WTC11 (cell line): ENCODE measurements at regions of chr7 and their contacts with region 1.

Region 1: DNA sequence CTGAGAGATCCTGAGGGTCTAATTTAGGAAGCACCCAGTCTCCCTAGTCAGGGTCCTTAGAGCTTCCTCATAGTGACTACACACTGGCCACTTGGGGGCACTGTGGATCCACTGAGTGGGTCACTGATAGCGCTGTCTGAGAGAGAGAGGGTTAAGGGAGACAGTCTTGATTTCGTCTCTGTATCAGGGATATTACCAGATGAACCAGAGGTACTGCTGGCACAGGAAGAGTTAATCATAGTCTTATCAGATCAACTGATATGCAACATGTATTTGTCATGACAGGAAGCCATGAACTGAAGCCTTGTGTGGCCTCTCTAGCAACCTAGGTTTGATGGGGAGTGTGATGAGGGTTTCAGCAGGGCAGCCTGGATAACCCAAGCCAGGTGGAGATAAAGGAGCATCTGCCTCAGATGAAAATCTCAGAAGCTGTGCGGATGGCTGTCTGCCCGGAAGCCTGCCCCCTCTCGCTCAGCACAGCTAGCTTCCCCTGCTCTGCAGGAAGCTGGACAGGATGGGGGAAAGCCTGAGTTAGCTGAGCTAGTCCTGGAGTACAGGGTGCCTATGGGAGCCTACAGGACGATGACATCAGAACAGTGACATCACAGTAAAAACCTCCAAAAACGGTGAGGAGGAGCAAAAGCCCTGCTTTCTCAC is 214.0 kb upstream of the PRSS1 start:
- DNase-seq: peak; percentile 86
- ATAC-seq: peak; percentile 100
- H3K4me3 Mint-ChIP-seq: peak overlapping the region; percentile 42; the same call in 1 of the 2 replicates
- H3K27ac Mint-ChIP-seq: 0 out of 2 replicates have a peak overlapping the region, but pooled peaks have one; percentile 42
- H3K4me1 Mint-ChIP-seq: peaks cover 4% of the 10 kb centered on the region
- H3K27me3 Mint-ChIP-seq: peaks cover 5% of the 10 kb centered on the region; the same call in 1 of the 2 replicates
- CTCF ChIP-seq: peak; percentile 70

Region 2: GRCh38 chr7:142496545-142497041 is 38.7 kb before region 1 on chr7:
- CTCF ChIA-PET with region 1: interaction called, 14 read pairs
- POLR2A ChIA-PET with region 1: no interaction called
- DNase-seq: no peak
- ATAC-seq: peak; percentile 82
- H3K4me3 Mint-ChIP-seq: peak overlapping the region; percentile 45
- H3K27ac Mint-ChIP-seq: no peak overlapping the region
- H3K4me1 Mint-ChIP-seq: no peaks in the 10 kb centered on the region
- H3K27me3 Mint-ChIP-seq: peaks cover 17% of the 10 kb centered on the region
- CTCF ChIP-seq: peak; percentile 74

Region 3: GRCh38 chr7:142523821-142524460 is 11.3 kb before region 1 on chr7:
- CTCF ChIA-PET with region 1: interaction called, 45 read pairs
- POLR2A ChIA-PET with region 1: no interaction called
- DNase-seq: no peak
- ATAC-seq: peak; percentile 27
- H3K4me3 Mint-ChIP-seq: no peak overlapping the region
- H3K27ac Mint-ChIP-seq: no peak overlapping the region
- H3K4me1 Mint-ChIP-seq: peaks cover 3% of the 10 kb centered on the region; the same call in 1 of the 2 replicates
- H3K27me3 Mint-ChIP-seq: peaks cover 2% of the 10 kb centered on the region; the same call in 1 of the 2 replicates
- CTCF ChIP-seq: no peak

Region 4: DNA sequence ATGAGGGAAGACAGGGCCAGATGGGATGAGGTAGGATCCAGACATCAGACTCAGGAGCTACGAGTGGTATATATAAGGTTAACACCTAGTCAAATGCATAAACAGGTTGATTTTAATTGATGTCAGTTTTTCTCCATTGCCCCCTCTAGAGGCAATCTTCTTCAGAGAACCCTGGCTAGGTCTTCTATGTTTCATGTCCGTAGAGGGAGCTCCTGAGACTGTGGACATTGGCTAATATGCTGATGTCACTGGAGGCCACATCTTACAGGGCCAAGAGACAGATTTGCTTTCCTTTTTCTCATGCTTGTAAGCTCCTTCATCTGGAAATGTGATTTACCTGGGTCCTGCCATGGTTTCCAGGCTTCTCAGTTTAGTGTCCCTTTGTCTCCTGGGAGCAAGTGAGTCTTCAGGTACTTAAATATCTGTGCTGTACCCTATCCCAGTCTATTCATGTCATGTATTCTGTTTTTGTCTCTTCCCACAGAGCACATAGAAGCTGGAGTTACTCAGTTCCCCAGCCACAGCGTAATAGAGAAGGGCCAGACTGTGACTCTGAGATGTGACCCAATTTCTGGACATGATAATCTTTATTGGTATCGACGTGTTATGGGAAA is 52.4 kb after region 1 on chr7:
- CTCF ChIA-PET with region 1: interaction called, 53 read pairs
- POLR2A ChIA-PET with region 1: no interaction called
- DNase-seq: no peak
- ATAC-seq: peak; percentile 98
- H3K4me3 Mint-ChIP-seq: no peak overlapping the region
- H3K27ac Mint-ChIP-seq: no peak overlapping the region
- H3K4me1 Mint-ChIP-seq: peaks cover 10% of the 10 kb centered on the region
- H3K27me3 Mint-ChIP-seq: no peaks in the 10 kb centered on the region; the same call in 1 of the 2 replicates
- CTCF ChIP-seq: no peak

Region 5: GRCh38 chr7:142632291-142633134 is 97.3 kb after region 1 on chr7:
- CTCF ChIA-PET with region 1: interaction called, 24 read pairs
- POLR2A ChIA-PET with region 1: no interaction called
- DNase-seq: peak; percentile 71
- ATAC-seq: peak; percentile 98
- H3K4me3 Mint-ChIP-seq: no peak overlapping the region
- H3K27ac Mint-ChIP-seq: no peak overlapping the region
- H3K4me1 Mint-ChIP-seq: peaks cover 2% of the 10 kb centered on the region; the same call in 1 of the 2 replicates
- H3K27me3 Mint-ChIP-seq: peaks cover 13% of the 10 kb centered on the region
- CTCF ChIP-seq: peak; percentile 63